Heart left ventricle (tissue), 16 donors: ENCODE measurements at regions of chr2 and their contacts with region 1.

Region 1: DNA sequence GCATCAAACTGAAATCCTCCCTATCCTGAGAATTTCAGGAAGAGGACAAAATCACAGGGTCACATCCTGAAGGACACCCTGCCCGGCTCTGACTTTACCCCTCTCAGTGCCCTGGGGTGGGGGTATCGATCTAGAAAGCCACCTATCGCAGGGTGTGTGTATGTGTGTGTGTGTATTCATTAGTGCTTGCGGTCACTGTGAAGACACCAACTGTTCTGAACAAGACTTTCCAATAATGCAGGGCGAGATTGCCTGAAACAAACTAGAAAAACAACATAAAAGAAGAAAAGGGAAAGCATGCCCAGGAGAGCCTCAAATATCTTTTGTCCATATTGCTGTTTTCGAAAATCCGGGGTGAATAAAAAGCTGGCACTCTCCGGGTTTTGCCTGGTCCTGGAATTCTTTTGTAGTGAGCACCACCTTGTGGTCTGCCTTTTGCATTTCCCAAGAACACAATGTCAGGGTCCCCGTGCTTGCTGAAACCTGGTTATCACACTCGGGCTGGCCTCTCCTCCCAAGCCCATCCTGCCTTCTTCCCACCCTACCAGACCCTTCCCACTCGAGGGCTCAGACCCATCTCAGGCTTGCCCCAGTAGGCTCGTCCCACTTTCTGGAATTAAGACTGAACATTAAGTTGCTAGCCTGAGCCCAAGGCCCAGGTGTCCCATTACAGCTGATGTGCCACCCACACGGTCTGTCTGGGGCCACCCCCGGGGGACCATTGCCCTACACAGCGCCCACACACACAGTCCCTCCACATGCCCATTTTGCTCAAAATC is 25.0 kb upstream of the COPS8 start:
- DNase-seq: peak in 3 of 5 donors; percentile 38 to 54 (median 51)
- ATAC-seq: peak; percentile 49 to 81 (median 72)
- H3K4me3 ChIP-seq: no peak overlapping the region
- H3K27ac ChIP-seq: no peak overlapping the region
- H3K4me1 ChIP-seq: peaks cover 0 to 6% (median 0%) of the 10 kb centered on the region in 12 donors
- H3K27me3 ChIP-seq: no peaks in the 10 kb centered on the region
- CTCF ChIP-seq: peak; percentile 34 to 82 (median 70)
- POLR2A ChIP-seq: no peak

Region 2: GRCh38 chr2:236343400-236344161 is 717.1 kb before region 1 on chr2:
- intact Hi-C with region 1: loop called in 1 of 10 experiments (anchors 2 kb)
- DNase-seq: peak in 3 of 5 donors; percentile 45 to 57 (median 53)
- ATAC-seq: no peak
- H3K4me3 ChIP-seq: no peak overlapping the region
- H3K27ac ChIP-seq: no peak overlapping the region
- H3K4me1 ChIP-seq: peaks cover 0 to 45% (median 9%) of the 10 kb centered on the region in 12 donors
- H3K27me3 ChIP-seq: no peaks in the 10 kb centered on the region
- CTCF ChIP-seq: peak; percentile 67 to 86 (median 81)
- POLR2A ChIP-seq: no peak

Region 3: GRCh38 chr2:236507393-236508085 is 553.2 kb before region 1 on chr2:
- intact Hi-C with region 1: loop called in 5 of 10 experiments (anchors 2 to 10 kb)
- DNase-seq: peak in 3 of 5 donors; percentile 33 to 57 (median 42)
- ATAC-seq: peak in 3 of 4 donors; percentile 44 to 78 (median 69)
- H3K4me3 ChIP-seq: peak overlapping the region in 11 of 12 donors; percentile 10 to 56 (median 45)
- H3K27ac ChIP-seq: no peak overlapping the region
- H3K4me1 ChIP-seq: peaks cover 0 to 7% (median 0%) of the 10 kb centered on the region in 12 donors
- H3K27me3 ChIP-seq: peaks cover 0 to 18% (median 6%) of the 10 kb centered on the region in 9 donors
- CTCF ChIP-seq: no peak
- POLR2A ChIP-seq: no peak